Tibial artery (tissue), 4 donors: ENCODE measurements at regions of chr4 and their contacts with region 1.

Region 1: GRCh38 chr4:76148142-76148865 is at the start of gene NUP54:
- DNase-seq: peak; percentile 95 to 96
- H3K4me3 ChIP-seq: peak within 1 kb of the TSS; percentile 80 to 86
- H3K27ac ChIP-seq: peak within 1 kb of the TSS; percentile 89 to 93
- H3K4me1 ChIP-seq: peaks cover 0 to 34% (median 19%) of the 10 kb centered on the region in 4 donors
- H3K27me3 ChIP-seq: no peaks in the 10 kb centered on the region
- CTCF ChIP-seq: no peak

Region 2: DNA sequence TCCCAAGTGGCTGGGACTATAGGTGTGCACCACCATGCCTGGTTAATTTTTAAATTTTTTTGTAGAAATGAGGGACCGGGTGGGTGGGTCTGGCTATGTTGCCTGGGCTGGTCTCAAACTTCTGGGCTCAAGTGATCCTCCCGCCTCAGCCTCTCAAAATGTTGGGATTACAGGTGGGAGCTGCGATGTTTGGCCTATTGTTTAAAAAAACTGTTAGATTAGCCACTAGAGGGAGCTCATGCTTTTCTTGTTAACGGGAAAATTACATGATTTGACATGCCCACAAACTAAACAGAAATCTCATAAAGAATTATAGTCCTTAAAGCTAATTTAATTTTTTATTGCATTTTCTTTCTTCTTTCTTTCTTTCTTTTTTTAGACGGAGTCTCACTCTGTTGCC is 152.6 kb before region 1 on chr4:
- intact Hi-C with region 1: loop called (anchors 10 kb)
- DNase-seq: no peak
- H3K4me3 ChIP-seq: no peak overlapping the region
- H3K27ac ChIP-seq: no peak overlapping the region
- H3K4me1 ChIP-seq: peaks cover 0 to 4% (median 2%) of the 10 kb centered on the region in 4 donors
- H3K27me3 ChIP-seq: no peaks in the 10 kb centered on the region
- CTCF ChIP-seq: peak; percentile 55 to 57

Region 3: DNA sequence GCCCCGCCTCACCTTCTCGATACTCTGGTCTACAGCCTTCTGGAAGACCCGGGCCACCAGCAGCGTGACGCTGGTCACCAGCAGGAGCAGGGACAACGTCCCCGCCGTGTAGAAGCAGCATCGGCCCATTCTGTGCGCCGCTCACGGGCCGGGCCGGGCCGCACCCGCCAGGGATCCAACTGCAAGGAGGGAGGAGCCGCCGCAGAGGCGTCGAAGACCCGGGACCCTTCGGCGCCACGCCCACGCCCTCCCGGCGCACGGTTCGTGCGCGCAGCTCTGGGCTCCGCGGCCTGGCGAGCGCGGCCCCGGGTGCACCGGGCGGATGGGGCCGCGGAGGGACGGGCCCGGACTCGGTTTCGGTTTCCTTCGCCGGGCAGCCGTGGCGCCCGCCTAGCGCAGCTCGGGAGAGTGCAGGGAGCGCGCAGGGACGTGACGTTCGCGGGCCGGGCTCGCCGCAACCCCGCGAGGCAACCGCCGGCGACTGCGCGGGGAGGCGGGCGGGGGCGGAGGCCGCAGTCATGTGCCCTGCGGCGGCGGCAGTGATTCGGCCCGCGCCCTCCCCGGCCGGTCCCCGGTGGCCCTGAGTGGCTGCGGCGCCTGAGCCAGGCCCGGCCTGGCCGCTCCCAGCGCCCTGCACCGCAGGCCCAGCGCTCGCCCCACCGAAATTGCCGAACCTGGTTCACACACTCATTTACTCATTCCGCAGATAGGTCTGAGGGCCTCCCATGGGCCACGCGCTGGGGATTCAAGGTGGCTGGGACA is 65.3 kb after region 1 on chr4 and contains the start of gene SCARB2:
- intact Hi-C with region 1: loop called (anchors 2 kb)
- DNase-seq: peak; percentile 84 to 94
- H3K4me3 ChIP-seq: peak within 1 kb of the TSS; percentile 88 to 89
- H3K27ac ChIP-seq: peak within 1 kb of the TSS; percentile 98 to 99
- H3K4me1 ChIP-seq: peaks cover 0 to 58% (median 48%) of the 10 kb centered on the region in 4 donors
- H3K27me3 ChIP-seq: no peaks in the 10 kb centered on the region
- CTCF ChIP-seq: peak in 1 of 2 experiments; percentile 31